Activated CD4-positive, alpha-beta T cell treated with anti-CD3 and anti-CD28 coated beads for 36 hours (primary cell): ENCODE measurements at regions of chr3 and their contacts with region 1.

Region 1: DNA sequence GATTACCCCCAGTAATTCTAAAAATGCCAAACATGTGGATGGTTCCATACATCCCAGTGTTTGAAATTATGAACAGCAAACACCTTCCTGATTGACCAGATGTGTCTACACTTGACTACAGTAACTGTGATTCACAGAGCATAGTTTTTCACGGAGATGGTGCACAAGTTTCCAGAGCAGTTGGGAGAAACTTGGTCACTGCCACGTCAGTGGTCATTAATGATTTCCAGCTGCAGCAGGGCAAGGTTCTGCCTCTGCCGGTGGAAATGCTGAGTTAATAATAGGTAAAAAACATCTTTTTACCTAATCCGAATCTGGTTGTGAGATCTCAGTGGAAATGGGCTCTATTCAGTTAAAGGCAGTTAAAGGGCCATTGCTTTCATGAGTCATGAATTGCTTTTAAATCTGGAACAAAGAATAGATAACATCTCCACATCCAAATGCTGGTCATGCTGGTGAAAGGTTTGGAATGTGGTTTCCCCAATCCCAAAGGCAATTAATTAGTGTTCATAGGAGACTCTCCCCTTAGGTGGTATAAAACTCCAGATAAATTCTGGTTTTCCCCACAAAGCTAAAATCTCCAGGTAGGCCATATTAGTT is 154.2 kb upstream of the FEZF2 start:
- DNase-seq: no peak
- ATAC-seq: no peak
- H3K4me3 Mint-ChIP-seq: no peak overlapping the region
- H3K27ac Mint-ChIP-seq: no peak overlapping the region
- H3K4me1 Mint-ChIP-seq: no peaks in the 10 kb centered on the region
- H3K27me3 Mint-ChIP-seq: no peaks in the 10 kb centered on the region

Region 2: GRCh38 chr3:62546266-62546665 is 18.7 kb after region 1 on chr3:
- CTCF ChIA-PET with region 1: no interaction called
- POLR2A ChIA-PET with region 1: no interaction called
- intact Hi-C with region 1: loop called in 1 of 2 experiments (anchors 2 kb)
- DNase-seq: no peak
- ATAC-seq: no peak
- H3K4me3 Mint-ChIP-seq: no peak overlapping the region
- H3K27ac Mint-ChIP-seq: no peak overlapping the region
- H3K4me1 Mint-ChIP-seq: no peaks in the 10 kb centered on the region
- H3K27me3 Mint-ChIP-seq: peaks cover 4% of the 10 kb centered on the region